Breast epithelium (tissue), 4 donors: ENCODE measurements at regions of chr6 and their contacts with region 1.

Region 1: DNA sequence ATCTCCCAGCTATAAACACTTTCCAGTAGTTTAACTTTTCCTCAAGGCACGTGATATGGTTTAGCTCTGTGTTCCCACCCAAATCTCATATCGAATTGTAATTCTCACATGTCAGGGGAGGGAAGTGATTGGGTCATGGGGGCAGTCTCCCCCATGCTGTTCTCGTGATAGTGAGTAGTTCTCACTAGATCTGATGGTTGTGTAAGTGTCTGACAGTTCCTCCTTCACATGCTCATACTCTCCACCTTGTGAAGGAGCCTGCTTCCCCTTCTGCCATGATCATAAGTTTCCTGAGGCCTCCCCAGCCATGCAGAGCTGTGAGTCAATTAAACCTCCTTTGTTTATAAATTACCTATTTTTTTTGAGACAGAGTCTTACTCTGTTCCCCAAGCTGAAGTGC is 127.9 kb downstream of the DTNBP1 start:
- DNase-seq: no peak
- H3K4me3 ChIP-seq: no peak overlapping the region
- H3K27ac ChIP-seq: no peak overlapping the region
- H3K4me1 ChIP-seq: no peaks in the 10 kb centered on the region
- H3K27me3 ChIP-seq: no peaks in the 10 kb centered on the region
- CTCF ChIP-seq: no peak
- POLR2A ChIP-seq: no peak

Region 2: GRCh38 chr6:14117158-14118090 is 1417.5 kb before region 1 on chr6 and contains the start of gene CD83:
- intact Hi-C with region 1: loop called (anchors 5 kb)
- DNase-seq: peak in 1 of 2 donors; percentile 33
- H3K4me3 ChIP-seq: peak within 1 kb of the TSS; percentile 51 to 72 (median 66)
- H3K27ac ChIP-seq: peak within 1 kb of the TSS; percentile 16 to 19
- H3K4me1 ChIP-seq: peaks cover 0 to 5% of the 10 kb centered on the region in 2 donors
- H3K27me3 ChIP-seq: no peaks in the 10 kb centered on the region
- CTCF ChIP-seq: no peak
- POLR2A ChIP-seq: no peak
- total RNA-seq, gene CD83: 2.9 to 18.4 (median 4.0) TPM